Calu3 (cell line): ENCODE measurements at regions of chr4 and their contacts with region 1.

Region 1: DNA sequence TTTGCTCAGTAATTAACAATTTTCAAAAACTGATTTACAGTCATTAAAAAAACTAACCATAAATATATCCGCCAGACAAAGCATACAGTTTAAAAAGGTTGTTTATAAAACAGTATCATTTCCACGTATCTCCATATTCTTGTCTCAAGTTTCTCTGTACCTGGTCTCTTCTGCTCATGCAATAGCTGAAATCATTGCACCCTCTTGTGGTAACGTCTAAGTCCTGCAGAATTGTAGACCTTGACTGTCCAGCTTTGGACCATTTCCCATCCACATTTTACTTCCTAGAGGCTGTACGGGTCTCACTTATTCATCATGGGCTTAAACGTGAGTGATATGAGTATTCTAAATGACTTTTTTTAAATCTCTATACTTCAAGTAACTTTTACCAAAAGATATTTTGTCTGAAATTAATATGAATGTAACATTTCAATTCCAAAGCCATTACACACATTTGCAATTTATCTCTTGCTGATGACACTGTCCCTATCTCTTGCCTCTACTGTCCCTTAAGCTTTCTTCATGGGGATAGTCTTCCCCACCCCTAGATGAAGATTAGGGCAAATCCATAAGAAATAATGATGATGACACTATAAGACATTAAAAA is 118.5 kb downstream of the BTC start:
- DNase-seq: peak; percentile 47
- H3K4me3 Mint-ChIP-seq: no peak overlapping the region
- H3K27ac Mint-ChIP-seq: peak overlapping the region; percentile 29
- H3K4me1 Mint-ChIP-seq: peaks cover 43% of the 10 kb centered on the region
- H3K27me3 Mint-ChIP-seq: no peaks in the 10 kb centered on the region
- CTCF ChIP-seq: peak; percentile 51

Region 2: DNA sequence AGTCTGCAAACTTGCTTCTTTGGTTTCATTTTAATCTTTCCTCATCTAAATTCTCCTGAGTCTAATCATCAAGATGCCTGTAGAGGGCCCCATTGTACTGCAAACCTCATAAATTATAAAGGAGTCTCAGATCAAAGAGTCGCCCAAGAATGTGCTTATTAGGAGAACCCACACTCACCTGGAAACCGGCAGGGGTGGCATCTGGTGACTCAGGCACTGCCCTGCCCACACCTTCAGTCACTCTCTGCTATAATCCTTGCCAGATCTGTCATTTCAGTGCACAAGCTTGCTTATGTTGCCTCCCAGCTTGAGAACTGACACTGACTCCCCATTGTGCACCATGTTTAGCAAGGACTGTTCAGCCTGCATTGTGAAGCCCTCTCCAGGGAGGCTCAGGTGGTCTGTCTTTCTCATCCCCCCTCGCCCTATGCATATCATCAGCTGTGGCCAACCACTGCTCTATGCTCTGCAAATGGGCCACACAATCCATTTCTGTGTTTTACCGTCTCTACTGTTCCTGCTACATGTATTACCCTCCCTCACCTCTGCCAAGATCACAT is 355.1 kb before region 1 on chr4:
- CTCF ChIA-PET with region 1: interaction called, 15 read pairs
- intact Hi-C with region 1: loop called (anchors 1 kb)
- DNase-seq: peak; percentile 85
- H3K4me3 Mint-ChIP-seq: peak overlapping the region; percentile 56
- H3K27ac Mint-ChIP-seq: peak overlapping the region; percentile 58
- H3K4me1 Mint-ChIP-seq: peaks cover 15% of the 10 kb centered on the region
- H3K27me3 Mint-ChIP-seq: no peaks in the 10 kb centered on the region
- CTCF ChIP-seq: peak; percentile 54

Region 3: GRCh38 chr4:74394476-74395136 is 281.2 kb before region 1 on chr4:
- CTCF ChIA-PET with region 1: interaction called, 5 read pairs
- intact Hi-C with region 1: loop called (anchors 5 kb)
- DNase-seq: no peak
- H3K4me3 Mint-ChIP-seq: peak overlapping the region; percentile 27
- H3K27ac Mint-ChIP-seq: peak overlapping the region; percentile 87
- H3K4me1 Mint-ChIP-seq: peaks cover 48% of the 10 kb centered on the region
- H3K27me3 Mint-ChIP-seq: no peaks in the 10 kb centered on the region
- CTCF ChIP-seq: no peak

Region 4: DNA sequence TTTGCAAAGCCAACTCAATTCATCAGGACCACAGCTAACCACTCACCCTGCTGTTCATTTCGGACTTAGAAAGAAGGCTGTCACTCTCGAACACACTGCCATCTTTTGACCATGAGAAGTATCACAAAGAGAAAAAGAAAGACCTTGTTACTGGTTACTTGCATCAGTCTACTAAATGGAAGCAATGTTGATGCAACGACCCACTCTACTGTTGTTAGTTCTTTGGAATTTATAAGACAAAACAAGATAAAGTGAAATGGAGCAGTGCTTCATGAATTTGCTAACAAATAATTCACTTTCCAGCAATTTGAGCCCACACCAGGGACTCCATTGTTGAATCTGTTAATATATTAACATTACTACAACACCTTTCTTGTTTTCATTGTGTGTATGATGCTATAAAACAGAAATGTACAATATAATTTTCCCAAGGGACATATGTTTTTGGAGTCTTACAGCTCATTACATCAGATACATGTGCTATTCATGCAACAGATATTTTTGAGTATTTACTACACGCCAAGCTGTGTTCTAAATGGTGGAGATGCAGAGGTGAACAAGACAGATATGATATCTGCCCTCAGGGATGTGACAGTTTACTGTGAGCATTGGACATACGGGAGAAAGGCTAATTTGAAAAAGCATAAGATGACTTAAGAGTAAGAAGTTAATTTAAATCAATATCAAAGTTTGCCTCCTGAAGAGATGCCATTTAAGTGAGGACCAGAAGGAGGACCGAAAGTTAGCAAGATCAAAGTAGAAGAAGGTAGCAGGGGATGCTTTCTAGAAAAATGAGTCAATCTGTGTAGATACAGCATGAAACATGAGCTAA is 143.6 kb before region 1 on chr4:
- CTCF ChIA-PET with region 1: interaction called, 11 read pairs
- intact Hi-C with region 1: loop called (anchors 1 kb)
- DNase-seq: peak; percentile 40
- H3K4me3 Mint-ChIP-seq: peak overlapping the region; percentile 52
- H3K27ac Mint-ChIP-seq: peak overlapping the region; percentile 99
- H3K4me1 Mint-ChIP-seq: peaks cover 39% of the 10 kb centered on the region
- H3K27me3 Mint-ChIP-seq: no peaks in the 10 kb centered on the region
- CTCF ChIP-seq: peak; percentile 33

Region 5: DNA sequence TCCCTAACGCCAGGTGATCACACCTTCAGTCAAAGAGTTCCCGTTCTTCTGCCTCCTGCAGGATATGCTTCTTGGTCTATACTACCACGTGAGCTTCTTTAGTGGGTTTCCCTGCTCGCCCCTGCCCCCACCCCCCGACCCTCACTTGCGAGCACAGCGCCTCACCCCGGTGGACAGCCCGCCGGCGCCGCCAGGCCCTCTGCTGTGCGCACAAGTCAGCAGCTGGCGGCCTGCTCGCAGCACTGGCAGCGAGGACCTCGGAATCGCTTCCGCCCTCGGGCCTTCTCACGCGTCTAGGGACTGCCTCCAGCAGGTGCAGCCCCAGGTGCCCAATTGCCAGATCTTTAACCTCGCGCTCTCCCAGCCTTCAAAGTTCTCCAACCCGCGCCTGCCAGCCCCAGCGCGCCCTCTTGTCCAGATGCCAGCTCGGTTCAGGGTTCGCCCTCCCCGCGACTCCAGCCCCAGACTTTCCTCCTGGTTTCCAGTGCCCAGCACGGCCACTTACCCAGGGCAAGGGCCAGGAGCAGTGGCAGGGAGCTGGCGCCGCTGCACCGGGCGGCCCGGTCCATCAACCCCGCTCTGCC is 118.1 kb after region 1 on chr4:
- CTCF ChIA-PET with region 1: interaction called, 7 read pairs
- intact Hi-C with region 1: loop called (anchors 5 kb)
- DNase-seq: peak; percentile 75
- H3K4me3 Mint-ChIP-seq: peak overlapping the region; percentile 93
- H3K27ac Mint-ChIP-seq: peak overlapping the region; percentile 85
- H3K4me1 Mint-ChIP-seq: peaks cover 14% of the 10 kb centered on the region
- H3K27me3 Mint-ChIP-seq: no peaks in the 10 kb centered on the region
- CTCF ChIP-seq: no peak

Region 6: DNA sequence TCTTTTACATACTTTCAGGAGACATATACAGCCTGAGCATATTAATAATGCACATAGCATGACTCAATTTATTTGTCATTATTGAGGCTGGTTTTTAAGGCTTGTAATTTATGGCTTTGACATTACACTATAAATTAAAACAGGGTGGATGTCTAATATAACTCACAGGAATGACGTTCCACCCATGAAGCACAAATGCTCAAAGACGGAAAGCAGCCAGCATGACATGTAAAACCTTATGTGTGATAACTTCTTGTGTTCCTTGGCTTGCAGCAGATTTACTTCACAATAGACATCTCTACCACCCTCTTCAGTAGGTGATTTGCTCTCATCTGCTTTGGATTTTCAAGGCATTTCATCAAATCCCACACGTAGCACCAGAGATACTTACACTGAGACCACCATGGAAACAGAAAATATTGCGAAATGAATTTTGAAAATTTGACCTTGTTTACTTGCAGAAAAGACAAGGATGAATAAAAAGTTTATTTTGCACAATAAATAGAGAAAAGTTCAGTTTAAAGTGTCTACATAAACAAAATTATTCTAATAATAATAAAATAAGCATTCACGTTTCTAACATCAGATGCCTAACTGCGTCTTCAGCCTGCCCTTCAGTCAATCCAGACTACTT is 183.3 kb after region 1 on chr4:
- CTCF ChIA-PET with region 1: no interaction called
- intact Hi-C with region 1: no loop called
- DNase-seq: no peak
- H3K4me3 Mint-ChIP-seq: no peak overlapping the region
- H3K27ac Mint-ChIP-seq: no peak overlapping the region
- H3K4me1 Mint-ChIP-seq: peaks cover 12% of the 10 kb centered on the region
- H3K27me3 Mint-ChIP-seq: no peaks in the 10 kb centered on the region
- CTCF ChIP-seq: no peak